WTC11 (cell line): ENCODE measurements at regions of chr1 and their contacts with region 1.

Region 1: DNA sequence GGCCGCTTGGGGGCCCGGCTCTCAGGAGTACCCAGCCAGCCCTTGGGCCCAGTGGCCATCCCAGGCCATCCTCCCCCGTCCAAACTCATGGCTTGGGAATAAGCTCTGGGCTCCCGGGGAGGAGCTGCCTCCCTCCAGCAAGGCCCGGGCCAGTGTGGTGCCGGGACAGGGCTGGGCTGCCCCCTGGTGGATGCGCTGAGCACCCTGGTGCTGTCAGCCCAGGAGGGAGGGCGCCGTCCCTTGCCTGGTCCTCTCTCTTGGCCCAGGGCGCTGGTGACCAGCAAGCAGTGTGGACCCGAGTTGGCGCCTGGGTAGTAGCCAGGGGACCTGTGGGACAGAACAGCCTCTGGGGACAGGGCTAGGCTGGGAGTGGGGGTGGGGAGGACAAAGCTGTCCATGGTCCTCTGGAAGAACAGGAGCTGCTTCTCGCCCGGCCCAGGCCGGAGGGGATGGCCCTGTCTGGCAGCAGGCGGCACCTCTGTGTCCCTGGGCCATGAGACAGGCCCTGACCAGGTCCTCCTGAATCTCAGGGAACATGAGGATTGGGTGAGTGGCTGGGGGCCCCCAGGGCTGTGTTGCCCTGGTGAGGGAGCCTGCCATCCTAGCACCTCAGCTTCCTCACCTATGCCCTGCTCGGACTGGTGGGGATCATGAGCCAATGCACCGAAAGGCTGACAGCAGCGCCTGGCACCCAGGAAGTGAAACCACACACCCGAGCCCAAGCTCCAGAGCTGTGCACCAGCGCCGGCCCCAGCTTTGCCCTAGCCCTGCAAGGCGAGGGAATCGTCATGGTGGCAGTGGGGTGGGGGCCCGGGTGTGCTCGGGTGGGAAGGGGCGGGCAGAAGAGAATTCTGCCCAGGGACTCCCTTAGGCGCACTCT is 9.4 kb downstream of the MORN1 start:
- DNase-seq: peak; percentile 87
- ATAC-seq: peak; percentile 90
- H3K4me3 Mint-ChIP-seq: no peak overlapping the region
- H3K27ac Mint-ChIP-seq: no peak overlapping the region
- H3K4me1 Mint-ChIP-seq: no peaks in the 10 kb centered on the region
- H3K27me3 Mint-ChIP-seq: no peaks in the 10 kb centered on the region
- CTCF ChIP-seq: peak; percentile 77

Region 2: GRCh38 chr1:2189459-2190425 is 192.2 kb before region 1 on chr1:
- CTCF ChIA-PET with region 1: interaction called, 170 read pairs
- POLR2A ChIA-PET with region 1: interaction called, 6 read pairs
- DNase-seq: peak; percentile 90
- ATAC-seq: peak; percentile 82
- H3K4me3 Mint-ChIP-seq: peak overlapping the region; percentile 54
- H3K27ac Mint-ChIP-seq: peak overlapping the region; percentile 93
- H3K4me1 Mint-ChIP-seq: peaks cover 11% of the 10 kb centered on the region
- H3K27me3 Mint-ChIP-seq: no peaks in the 10 kb centered on the region
- CTCF ChIP-seq: no peak

Region 3: DNA sequence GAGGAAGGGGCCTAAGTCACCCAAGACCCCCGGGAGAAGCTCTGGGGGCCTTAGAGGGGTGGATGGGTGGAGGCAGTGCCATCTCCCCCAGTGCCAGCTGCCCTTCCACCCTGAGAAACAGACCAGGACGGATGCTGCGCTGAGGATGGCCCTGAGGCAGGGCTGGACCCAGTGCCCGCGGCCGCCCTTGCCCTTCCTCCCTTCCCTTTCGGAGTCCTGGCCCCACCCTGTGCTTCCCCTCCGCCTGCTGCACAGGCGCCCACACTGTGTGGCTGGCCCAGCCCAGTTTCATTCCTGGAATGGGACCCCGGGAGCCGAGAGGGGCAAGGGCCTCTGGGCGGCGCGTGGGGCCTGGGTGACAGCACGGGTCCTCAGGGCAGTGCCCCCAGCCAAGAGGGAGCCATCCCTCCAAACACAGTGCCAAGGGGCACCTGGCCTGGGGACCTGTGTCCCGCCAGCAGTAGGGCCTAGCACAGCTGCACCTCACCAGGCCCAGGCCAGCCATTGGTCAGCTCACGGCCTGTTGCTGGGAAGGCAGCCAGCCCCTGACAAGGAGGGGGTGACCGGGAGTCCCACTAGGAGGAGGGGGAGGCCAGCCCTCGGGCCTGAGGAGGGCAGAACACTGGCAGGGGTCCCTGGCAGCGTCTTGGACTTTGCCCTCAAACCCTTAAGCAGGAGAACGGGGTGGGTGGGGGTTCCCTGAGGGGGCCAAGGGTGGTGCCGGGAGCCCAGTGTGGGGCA is 167.3 kb before region 1 on chr1:
- CTCF ChIA-PET with region 1: interaction called, 10 read pairs
- POLR2A ChIA-PET with region 1: no interaction called
- DNase-seq: no peak
- ATAC-seq: no peak
- H3K4me3 Mint-ChIP-seq: no peak overlapping the region
- H3K27ac Mint-ChIP-seq: no peak overlapping the region
- H3K4me1 Mint-ChIP-seq: 0 out of 2 replicates have a peak, but pooled peaks cover 3% of the 10 kb centered on the region
- H3K27me3 Mint-ChIP-seq: no peaks in the 10 kb centered on the region; the same call in 1 of the 2 replicates
- CTCF ChIP-seq: no peak

Region 4: DNA sequence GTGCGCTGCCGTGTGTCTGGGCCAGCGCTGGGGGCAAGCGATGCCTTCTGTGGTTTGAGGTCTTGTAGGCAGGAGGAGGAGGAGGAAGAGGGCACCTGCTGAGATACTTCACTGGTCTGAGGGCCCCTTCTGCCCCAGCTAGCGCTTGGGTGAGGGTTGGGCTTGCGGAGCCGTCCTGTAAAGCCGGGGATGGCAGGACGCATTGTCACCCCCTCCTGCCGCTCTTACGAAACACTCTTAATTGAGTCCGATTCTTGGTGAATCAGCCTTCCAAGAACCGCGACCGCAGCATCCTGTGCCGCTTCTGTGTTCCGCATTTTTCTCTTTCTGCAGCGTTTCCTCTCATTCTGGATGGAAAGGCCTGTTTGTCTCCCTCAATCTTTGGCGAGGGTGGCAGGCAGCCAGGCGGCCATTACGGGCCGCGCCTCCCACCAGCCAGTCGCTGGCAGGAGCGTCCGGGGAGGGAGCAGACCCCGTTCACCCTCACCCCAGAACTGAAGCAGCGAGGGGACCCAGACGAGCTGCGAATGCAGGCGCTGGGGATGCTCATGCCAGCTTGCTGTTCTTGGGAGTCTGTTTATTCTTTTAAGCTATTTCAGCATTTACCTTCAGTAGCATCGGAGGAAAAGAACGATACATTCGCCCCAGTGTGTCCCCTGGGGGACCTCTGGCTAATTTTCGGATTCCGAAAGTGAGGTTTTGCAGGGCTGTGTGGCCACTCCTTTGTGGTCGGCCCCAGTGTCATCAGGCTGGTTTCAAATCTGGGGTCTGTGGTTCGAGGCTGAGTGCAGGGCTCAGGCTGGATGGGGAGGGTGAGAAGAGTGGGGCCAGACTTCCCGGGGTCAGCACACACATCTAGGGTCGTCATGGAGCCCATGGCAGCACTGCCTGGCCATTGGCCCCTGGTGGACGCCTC is 91.1 kb before region 1 on chr1:
- CTCF ChIA-PET with region 1: interaction called, 11 read pairs
- POLR2A ChIA-PET with region 1: no interaction called
- DNase-seq: no peak
- ATAC-seq: peak; percentile 21; the same call in 1 of the 2 replicates
- H3K4me3 Mint-ChIP-seq: no peak overlapping the region
- H3K27ac Mint-ChIP-seq: peak overlapping the region; percentile 95
- H3K4me1 Mint-ChIP-seq: peaks cover 47% of the 10 kb centered on the region
- H3K27me3 Mint-ChIP-seq: no peaks in the 10 kb centered on the region
- CTCF ChIP-seq: no peak

Region 5: GRCh38 chr1:2344121-2344681 is 37.8 kb before region 1 on chr1:
- CTCF ChIA-PET with region 1: interaction called, 12 read pairs
- POLR2A ChIA-PET with region 1: no interaction called
- DNase-seq: no peak
- ATAC-seq: no peak
- H3K4me3 Mint-ChIP-seq: no peak overlapping the region
- H3K27ac Mint-ChIP-seq: no peak overlapping the region
- H3K4me1 Mint-ChIP-seq: no peaks in the 10 kb centered on the region
- H3K27me3 Mint-ChIP-seq: no peaks in the 10 kb centered on the region; the same call in 1 of the 2 replicates
- CTCF ChIP-seq: no peak

Region 6: DNA sequence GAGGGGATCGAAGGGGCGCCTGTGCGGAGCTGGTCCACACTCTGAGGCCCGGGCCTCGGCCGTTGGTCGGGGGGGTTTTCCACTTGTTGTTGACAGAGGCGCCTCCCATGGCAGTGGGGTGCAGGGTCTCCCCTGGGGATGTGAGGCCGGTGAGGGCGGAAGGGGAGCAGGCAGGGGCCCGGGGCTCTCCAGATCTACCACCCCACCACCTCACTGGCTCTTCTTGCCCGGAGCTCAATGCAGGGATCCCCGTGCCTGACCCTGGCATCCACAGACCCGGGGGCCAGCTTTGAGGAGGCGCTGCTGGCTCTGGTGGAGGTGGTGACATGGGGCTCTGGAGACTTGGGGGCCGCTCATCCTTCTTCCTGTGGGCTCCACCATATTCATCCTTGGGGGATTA is 37.4 kb after region 1 on chr1:
- CTCF ChIA-PET with region 1: no interaction called
- POLR2A ChIA-PET with region 1: no interaction called
- DNase-seq: no peak
- ATAC-seq: no peak
- H3K4me3 Mint-ChIP-seq: no peak overlapping the region
- H3K27ac Mint-ChIP-seq: no peak overlapping the region
- H3K4me1 Mint-ChIP-seq: peaks cover 9% of the 10 kb centered on the region
- H3K27me3 Mint-ChIP-seq: peaks cover 24% of the 10 kb centered on the region
- CTCF ChIP-seq: no peak

Region 7: GRCh38 chr1:2429780-2430591 is 48.0 kb after region 1 on chr1:
- CTCF ChIA-PET with region 1: no interaction called
- POLR2A ChIA-PET with region 1: no interaction called
- DNase-seq: peak; percentile 58
- ATAC-seq: peak; percentile 57
- H3K4me3 Mint-ChIP-seq: no peak overlapping the region
- H3K27ac Mint-ChIP-seq: no peak overlapping the region
- H3K4me1 Mint-ChIP-seq: no peaks in the 10 kb centered on the region
- H3K27me3 Mint-ChIP-seq: no peaks in the 10 kb centered on the region
- CTCF ChIP-seq: peak; percentile 55

Region 8: GRCh38 chr1:2514863-2515762 is 133.1 kb after region 1 on chr1:
- CTCF ChIA-PET with region 1: no interaction called
- POLR2A ChIA-PET with region 1: no interaction called
- DNase-seq: no peak
- ATAC-seq: no peak
- H3K4me3 Mint-ChIP-seq: no peak overlapping the region
- H3K27ac Mint-ChIP-seq: no peak overlapping the region
- H3K4me1 Mint-ChIP-seq: no peaks in the 10 kb centered on the region
- H3K27me3 Mint-ChIP-seq: no peaks in the 10 kb centered on the region
- CTCF ChIP-seq: no peak